Right ventricle myocardium inferior (tissue), 1 donor: ENCODE measurements at regions of chr9 and their contacts with region 1.

Region 1: GRCh38 chr9:95510709-95511615 is 5.8 kb downstream of the PTCH1 start:
- DNase-seq: peak; percentile 94
- ATAC-seq: peak; percentile 86

Region 2: GRCh38 chr9:95317119-95317892 is 193.7 kb before region 1 on chr9 and contains the start of gene FANCC:
- intact Hi-C with region 1: loop called (anchors 5 kb)
- DNase-seq: peak; percentile 96
- ATAC-seq: peak; percentile 96
- total RNA-seq, gene FANCC: 6.1 TPM

Region 3: GRCh38 chr9:95336281-95336680 is 174.7 kb before region 1 on chr9:
- intact Hi-C with region 1: no loop called
- DNase-seq: no peak
- ATAC-seq: no peak

Region 4: GRCh38 chr9:95425910-95426551 is 84.9 kb before region 1 on chr9:
- intact Hi-C with region 1: loop called (anchors 5 kb)
- DNase-seq: no peak
- ATAC-seq: peak; percentile 38

Region 5: DNA sequence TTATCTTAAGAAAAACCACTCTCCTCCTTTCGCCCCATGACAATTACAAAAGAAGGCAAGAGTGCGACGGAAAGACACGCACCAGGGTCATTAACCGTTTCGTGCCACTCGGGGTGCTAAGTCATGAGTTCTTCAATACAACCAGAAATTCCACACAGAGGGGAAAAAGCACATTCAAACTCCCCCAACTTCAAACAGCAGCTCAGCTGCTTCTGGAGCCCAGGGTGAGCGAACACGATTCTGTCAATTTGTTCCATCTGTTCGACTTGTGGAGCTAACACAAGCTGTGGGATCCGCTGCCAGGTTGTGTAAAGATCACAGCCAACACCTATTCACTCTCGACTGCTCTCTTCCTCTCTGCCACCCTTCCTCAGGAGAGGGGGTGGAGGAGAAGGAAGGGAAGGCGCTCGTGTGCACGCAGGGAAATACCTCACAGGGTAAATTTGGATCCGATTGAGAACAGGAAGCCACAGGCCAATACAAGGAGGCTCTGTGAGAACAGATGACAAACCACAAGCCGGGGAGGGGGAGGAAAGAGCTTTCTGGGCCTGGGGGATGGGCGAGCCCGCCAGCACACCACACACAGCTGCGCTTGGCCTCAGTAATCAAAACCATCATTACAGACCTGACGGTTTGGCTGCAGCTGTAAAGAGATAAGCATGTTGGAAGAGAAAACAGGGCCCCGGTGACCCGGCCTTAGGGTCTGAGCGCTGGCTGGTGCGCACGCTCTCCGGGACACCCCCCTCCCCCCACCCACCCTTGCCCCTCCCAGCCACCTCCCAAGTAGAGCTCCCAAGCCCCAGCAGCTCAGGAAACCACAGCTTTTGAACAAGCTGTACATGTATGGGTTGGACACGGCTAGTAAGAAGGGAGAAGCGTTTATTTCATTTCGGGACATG is 48.5 kb before region 1 on chr9:
- intact Hi-C with region 1: loop called (anchors 5 kb)
- DNase-seq: no peak
- ATAC-seq: peak; percentile 90

Region 6: DNA sequence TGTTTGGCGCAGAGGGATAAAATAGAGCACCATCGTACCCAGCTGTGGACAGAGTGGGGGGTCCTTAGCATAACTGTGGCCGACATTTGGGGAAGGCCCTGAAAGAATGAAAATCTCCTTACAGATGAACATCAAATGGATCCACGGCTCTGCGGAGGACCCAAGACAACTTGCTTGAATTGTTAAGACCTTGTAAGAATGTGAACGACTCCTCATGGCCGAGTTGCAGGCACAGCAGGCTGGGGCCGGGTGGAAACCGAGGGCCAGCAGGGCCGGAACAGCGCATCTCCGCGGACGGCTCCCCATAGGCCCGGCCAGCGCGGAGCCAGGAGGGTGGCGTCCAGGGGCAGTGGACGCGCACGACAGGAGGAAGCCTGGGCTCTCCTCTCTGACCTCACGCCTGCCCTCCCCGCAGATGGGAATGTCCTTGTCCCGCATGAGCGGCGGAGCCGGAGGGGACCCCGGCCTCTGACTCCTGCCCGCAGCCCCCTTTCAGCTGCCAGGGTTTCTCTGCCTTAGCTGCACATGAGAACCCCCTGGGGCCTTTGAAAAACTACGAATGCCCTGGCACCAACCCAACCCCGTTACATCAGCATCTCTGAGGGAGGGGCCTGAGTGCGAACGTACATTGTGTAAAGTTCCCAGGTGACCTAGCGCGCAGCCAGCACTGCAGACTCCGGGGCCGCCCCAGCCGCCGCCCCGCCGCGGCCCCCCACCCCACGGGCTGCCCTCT is 42.0 kb after region 1 on chr9:
- intact Hi-C with region 1: no loop called
- DNase-seq: no peak
- ATAC-seq: peak; percentile 80

Region 7: DNA sequence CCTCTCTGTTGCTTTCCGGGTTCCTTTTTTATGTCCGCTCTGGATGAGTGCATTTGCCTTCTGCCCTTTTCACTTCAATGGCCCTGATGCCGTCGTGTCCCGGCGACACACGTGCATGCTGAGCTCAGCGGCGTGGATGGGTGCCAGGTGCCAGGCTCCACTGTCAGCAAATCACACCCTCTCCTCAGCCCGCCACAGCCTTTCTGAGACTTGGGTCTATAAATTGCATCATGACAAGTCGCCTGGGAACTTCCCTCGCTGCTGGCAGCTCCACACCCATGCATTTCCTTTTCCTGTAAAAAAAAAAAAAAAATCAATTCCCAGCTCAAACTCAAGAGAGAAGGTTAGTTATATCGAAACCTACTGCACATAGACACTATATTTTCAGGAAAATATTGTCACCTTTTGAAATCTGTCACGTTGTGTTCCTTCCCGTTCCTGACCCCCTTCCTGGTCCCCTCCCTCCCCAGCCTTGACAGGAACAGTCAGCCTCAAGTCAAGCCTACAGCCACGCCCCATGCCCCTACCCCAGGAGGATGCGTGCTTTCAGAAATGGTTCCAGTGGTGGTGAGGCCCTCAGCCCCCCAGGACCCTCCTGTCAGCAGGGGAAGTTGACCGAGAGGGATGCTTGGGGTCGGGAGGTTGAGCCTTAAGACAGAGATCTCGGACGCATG is 116.1 kb after region 1 on chr9:
- intact Hi-C with region 1: loop called (anchors 5 kb)
- DNase-seq: no peak
- ATAC-seq: peak; percentile 50

Region 8: GRCh38 chr9:95875305-95876137 is 364.6 kb after region 1 on chr9 and contains the start of gene ERCC6L2:
- intact Hi-C with region 1: loop called (anchors 2 kb)
- DNase-seq: peak; percentile 98
- ATAC-seq: peak; percentile 96
- total RNA-seq, gene ERCC6L2: 20.6 TPM